K562 (cell line): ENCODE measurements at regions of chrX and their contacts with region 1.

Region 1: GRCh38 chrX:57643698-57644097 is 36.4 kb downstream of the NLRP2B start:
- DNase-seq: no peak
- ATAC-seq: no peak
- H3K4me3 ChIP-seq: no peak overlapping the region
- H3K27ac ChIP-seq: no peak overlapping the region
- H3K4me1 ChIP-seq: no peaks in the 10 kb centered on the region
- H3K27me3 ChIP-seq: no peaks in the 10 kb centered on the region
- CTCF ChIP-seq: no peak
- EP300 ChIP-seq: no peak
- POLR2A ChIP-seq: no peak
- RAD21 ChIP-seq: no peak

Region 2: GRCh38 chrX:57083143-57083542 is 560.6 kb before region 1 on chrX:
- CTCF ChIA-PET with region 1: no interaction called
- POLR2A ChIA-PET with region 1: no interaction called
- in situ Hi-C with region 1: no loop called
- intact Hi-C with region 1: no loop called
- DNase-seq: no peak
- ATAC-seq: no peak
- H3K4me3 ChIP-seq: no peak overlapping the region
- H3K27ac ChIP-seq: no peak overlapping the region
- H3K4me1 ChIP-seq: no peaks in the 10 kb centered on the region
- H3K27me3 ChIP-seq: no peaks in the 10 kb centered on the region
- CTCF ChIP-seq: no peak
- EP300 ChIP-seq: no peak
- POLR2A ChIP-seq: no peak
- RAD21 ChIP-seq: no peak

Region 3: GRCh38 chrX:57573754-57574153 is 69.9 kb before region 1 on chrX:
- CTCF ChIA-PET with region 1: no interaction called
- POLR2A ChIA-PET with region 1: no interaction called
- in situ Hi-C with region 1: no loop called
- intact Hi-C with region 1: loop called (anchors 10 kb)
- DNase-seq: peak in 1 of 4 experiments; percentile 10
- ATAC-seq: no peak; the same call in 2 of the 3 replicates
- H3K4me3 ChIP-seq: no peak overlapping the region
- H3K27ac ChIP-seq: no peak overlapping the region
- H3K4me1 ChIP-seq: no peaks in the 10 kb centered on the region
- H3K27me3 ChIP-seq: no peaks in the 10 kb centered on the region
- CTCF ChIP-seq: peak in 2 of 3 experiments; percentile 10 to 38; a peak in 2 of 6 replicates
- EP300 ChIP-seq: no peak
- POLR2A ChIP-seq: no peak
- RAD21 ChIP-seq: peak in 1 of 2 experiments; percentile 27; a peak in 2 of 4 replicates